Motor neuron (in vitro differentiated cells): ENCODE measurements at regions of chr2 and their contacts with region 1.

Region 1: GRCh38 chr2:187442378-187442777 is 5.7 kb downstream of the CALCRL start:
- ATAC-seq: no peak
- H3K4me3 ChIP-seq: no peak overlapping the region
- H3K27ac ChIP-seq: no peak overlapping the region
- H3K4me1 ChIP-seq: peaks cover 6 to 7% of the 10 kb centered on the region in 2 donors

Region 2: GRCh38 chr2:187299122-187299906 is 143.1 kb before region 1 on chr2:
- in situ Hi-C with region 1: loop called in 1 of 9 experiments (anchors 5 kb)
- ATAC-seq: peak in 1 of 8 experiments; percentile 14
- H3K4me3 ChIP-seq: no peak overlapping the region
- H3K27ac ChIP-seq: no peak overlapping the region
- H3K4me1 ChIP-seq: peaks cover 0 to 3% of the 10 kb centered on the region in 2 donors